ENCODE measurements at regions of chr19 and their contacts with region 1.

Region 1: GRCh38 chr19:11035441-11036377 is 53.6 kb upstream of the LDLR start:
- DNase-seq: peak; percentile 91
- H3K4me3 Mint-ChIP-seq: no peak overlapping the region
- H3K27ac Mint-ChIP-seq: no peak overlapping the region
- H3K4me1 Mint-ChIP-seq: peaks cover 6% of the 10 kb centered on the region
- H3K27me3 Mint-ChIP-seq: no peaks in the 10 kb centered on the region

Region 2: GRCh38 chr19:11020982-11021759 is 14.5 kb before region 1 on chr19:
- CTCF ChIA-PET with region 1: interaction called, 10 read pairs
- POLR2A ChIA-PET with region 1: no interaction called
- intact Hi-C with region 1: no loop called
- DNase-seq: no peak
- H3K4me3 Mint-ChIP-seq: no peak overlapping the region
- H3K27ac Mint-ChIP-seq: no peak overlapping the region
- H3K4me1 Mint-ChIP-seq: no peaks in the 10 kb centered on the region
- H3K27me3 Mint-ChIP-seq: no peaks in the 10 kb centered on the region

Region 3: DNA sequence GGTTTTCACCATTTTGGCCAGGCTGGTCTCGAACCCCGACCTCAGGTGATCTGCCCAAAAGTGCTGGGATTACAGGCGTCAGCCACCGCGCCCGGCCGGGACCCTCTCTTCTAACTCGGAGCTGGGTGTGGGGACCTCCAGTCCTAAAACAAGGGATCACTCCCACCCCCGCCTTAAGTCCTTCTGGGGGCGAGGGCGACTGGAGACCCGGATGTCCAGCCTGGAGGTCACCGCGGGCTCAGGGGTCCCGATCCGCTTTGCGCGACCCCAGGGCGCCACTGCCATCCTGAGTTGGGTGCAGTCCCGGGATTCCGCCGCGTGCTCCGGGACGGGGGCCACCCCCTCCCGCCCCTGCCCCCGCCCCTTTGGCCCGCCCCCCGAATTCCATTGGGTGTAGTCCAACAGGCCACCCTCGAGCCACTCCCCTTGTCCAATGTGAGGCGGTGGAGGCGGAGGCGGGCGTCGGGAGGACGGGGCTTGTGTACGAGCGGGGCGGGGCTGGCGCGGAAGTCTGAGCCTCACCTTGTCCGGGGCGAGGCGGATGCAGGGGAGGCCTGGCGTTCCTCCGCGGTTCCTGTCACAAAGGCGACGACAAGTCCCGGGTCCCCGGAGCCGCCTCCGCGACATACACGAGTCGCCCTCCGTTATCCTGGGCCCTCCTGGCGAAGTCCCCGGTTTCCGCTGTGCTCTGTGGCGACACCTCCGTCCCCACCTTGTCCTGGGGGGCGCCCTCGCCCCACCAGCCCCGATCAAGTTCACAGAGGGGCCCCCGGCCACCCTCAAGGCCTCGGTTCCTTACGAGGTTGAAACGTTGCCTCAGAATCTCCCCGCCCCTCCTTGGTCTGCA is 54.6 kb after region 1 on chr19:
- CTCF ChIA-PET with region 1: interaction called, 16 read pairs
- POLR2A ChIA-PET with region 1: interaction called, 4 read pairs
- intact Hi-C with region 1: no loop called
- DNase-seq: peak; percentile 99
- H3K4me3 Mint-ChIP-seq: peak overlapping the region; percentile 95
- H3K27ac Mint-ChIP-seq: peak overlapping the region; percentile 98
- H3K4me1 Mint-ChIP-seq: peaks cover 45% of the 10 kb centered on the region
- H3K27me3 Mint-ChIP-seq: no peaks in the 10 kb centered on the region

Region 4: GRCh38 chr19:11125994-11126685 is 90.4 kb after region 1 on chr19:
- CTCF ChIA-PET with region 1: interaction called, 34 read pairs
- POLR2A ChIA-PET with region 1: no interaction called
- intact Hi-C with region 1: loop called (anchors 1 kb)
- DNase-seq: peak; percentile 82
- H3K4me3 Mint-ChIP-seq: no peak overlapping the region
- H3K27ac Mint-ChIP-seq: no peak overlapping the region
- H3K4me1 Mint-ChIP-seq: no peaks in the 10 kb centered on the region
- H3K27me3 Mint-ChIP-seq: no peaks in the 10 kb centered on the region